ENCODE measurements at regions of chr7 and their contacts with region 1.

Region 1: DNA sequence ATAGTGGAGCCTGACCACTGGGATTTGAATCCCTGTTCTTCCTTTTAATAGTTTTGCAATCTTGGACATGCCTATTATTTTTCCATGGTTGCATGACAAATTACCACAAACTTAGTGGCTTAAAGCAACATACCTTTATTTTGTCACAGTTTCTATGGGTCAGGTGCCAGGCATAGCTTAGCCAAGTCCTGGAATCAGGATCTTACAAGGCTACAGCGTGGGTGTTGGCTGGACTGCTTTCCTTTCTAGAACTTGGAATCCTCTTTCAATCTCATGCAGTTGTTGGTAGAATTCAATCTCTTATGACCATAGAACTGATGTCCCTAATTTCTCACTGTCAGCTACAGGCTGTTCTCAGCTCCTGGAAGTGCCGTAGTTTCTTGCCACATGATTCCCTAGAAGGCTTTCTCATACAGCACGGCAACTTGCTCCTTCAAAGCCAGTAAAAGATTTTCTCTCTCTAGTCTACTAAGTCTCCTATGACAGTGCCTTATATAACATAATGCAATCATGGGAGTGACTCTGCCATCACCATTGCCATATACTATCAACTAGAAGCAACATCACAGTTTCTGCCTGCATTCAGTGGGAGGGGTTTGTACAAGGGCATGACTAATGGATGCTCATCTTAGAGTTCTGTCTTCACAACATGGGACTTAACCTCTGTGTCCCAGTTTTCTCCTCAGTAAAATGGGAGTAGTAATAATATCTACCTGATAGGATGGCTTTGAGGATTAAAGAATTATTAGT is 243.4 kb upstream of the FZD1 start:
- DNase-seq: no peak
- CTCF ChIP-seq: no peak

Region 2: DNA sequence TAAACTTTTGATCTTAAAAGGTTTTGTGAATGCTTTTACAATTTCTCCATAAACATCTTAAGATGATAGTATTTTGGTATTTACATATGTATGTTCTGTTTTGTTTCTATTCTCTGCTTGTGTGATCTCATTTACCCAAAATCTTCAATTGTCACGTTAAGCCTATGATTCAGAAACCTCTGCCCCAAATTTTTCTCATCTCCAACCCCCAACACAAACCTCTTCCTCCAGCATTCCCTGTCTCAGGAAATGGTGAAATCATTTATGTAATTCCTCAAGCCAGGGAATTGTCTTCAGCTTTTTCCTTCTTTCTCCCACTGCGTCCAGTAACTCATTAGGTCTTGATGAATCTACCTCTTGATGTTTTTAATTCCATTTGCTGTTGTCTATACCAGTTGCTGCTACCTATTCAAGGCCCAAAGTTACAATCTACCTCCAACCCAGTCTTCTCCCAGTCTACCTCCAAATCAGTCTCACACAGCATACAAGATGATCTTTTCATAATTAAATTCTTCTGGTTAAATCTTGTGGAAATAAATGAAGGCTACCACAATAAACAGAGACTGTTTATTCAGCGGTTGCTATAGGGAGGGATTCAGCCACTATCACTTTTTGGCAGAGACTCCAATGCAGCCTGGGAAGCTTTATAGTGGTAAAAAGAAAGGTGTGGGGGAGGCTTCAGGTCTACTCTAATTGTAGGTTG is 770.1 kb before region 1 on chr7:
- in situ Hi-C with region 1: no loop called
- DNase-seq: no peak
- CTCF ChIP-seq: no peak

Region 3: GRCh38 chr7:90708841-90709317 is 311.9 kb before region 1 on chr7:
- in situ Hi-C with region 1: loop called (anchors 10 kb)
- DNase-seq: peak; percentile 18
- CTCF ChIP-seq: peak; percentile 77